Dorsolateral prefrontal cortex (tissue), 120 donors: ENCODE measurements at regions of chr5 and their contacts with region 1.

Region 1: GRCh38 chr5:31733371-31733770 is 94.4 kb downstream of the PDZD2 start:
- DNase-seq: peak; percentile 23 to 85 (median 71)
- H3K4me3 ChIP-seq: peak overlapping the region in 21 of 59 donors; percentile 2 to 43 (median 17)
- H3K27ac ChIP-seq: peak overlapping the region; percentile 46 to 94 (median 83)
- H3K27me3 ChIP-seq: no peaks in the 10 kb centered on the region
- CTCF ChIP-seq: peak in 14 of 56 donors; percentile 11 to 38 (median 20)

Region 2: GRCh38 chr5:31645420-31646081 is 87.8 kb before region 1 on chr5:
- intact Hi-C with region 1: loop called in 1 of 2 experiments (anchors 2 kb)
- DNase-seq: peak in 2 of 10 donors; percentile 14 to 33
- H3K4me3 ChIP-seq: no peak overlapping the region
- H3K27ac ChIP-seq: peak overlapping the region in 3 of 59 donors; percentile 0 to 35 (median 17)
- H3K27me3 ChIP-seq: no peaks in the 10 kb centered on the region
- CTCF ChIP-seq: no peak